ENCODE measurements at regions of chr7 and their contacts with region 1.

Region 1: GRCh38 chr7:151705636-151706276 is 171.2 kb downstream of the PRKAG2 start:
- DNase-seq: peak; percentile 30
- ATAC-seq: peak; percentile 78
- H3K4me3 ChIP-seq: no peak overlapping the region; a peak in 1 of 6 replicates
- H3K27ac ChIP-seq: no peak overlapping the region
- H3K4me1 ChIP-seq: peaks cover 7% of the 10 kb centered on the region; the same call in 1 of the 2 replicates
- H3K27me3 ChIP-seq: peaks cover 4 to 18% of the 10 kb centered on the region in 2 experiments; a peak in 3 of 5 replicates
- CTCF ChIP-seq: peak; percentile 54
- EP300 ChIP-seq: no peak
- POLR2A ChIP-seq: no peak
- RAD21 ChIP-seq: no peak

Region 2: GRCh38 chr7:151570366-151570915 is 135.3 kb before region 1 on chr7:
- CTCF ChIA-PET with region 1: no interaction called
- POLR2A ChIA-PET with region 1: no interaction called
- in situ Hi-C with region 1: no loop called
- intact Hi-C with region 1: loop called (anchors 5 kb)
- DNase-seq: no peak
- ATAC-seq: no peak
- H3K4me3 ChIP-seq: no peak overlapping the region
- H3K27ac ChIP-seq: no peak overlapping the region
- H3K4me1 ChIP-seq: no peaks in the 10 kb centered on the region
- H3K27me3 ChIP-seq: no peaks in the 10 kb centered on the region
- CTCF ChIP-seq: 0 out of 2 replicates have a peak, but pooled peaks have one; percentile 26
- EP300 ChIP-seq: no peak
- POLR2A ChIP-seq: no peak
- RAD21 ChIP-seq: no peak

Region 3: DNA sequence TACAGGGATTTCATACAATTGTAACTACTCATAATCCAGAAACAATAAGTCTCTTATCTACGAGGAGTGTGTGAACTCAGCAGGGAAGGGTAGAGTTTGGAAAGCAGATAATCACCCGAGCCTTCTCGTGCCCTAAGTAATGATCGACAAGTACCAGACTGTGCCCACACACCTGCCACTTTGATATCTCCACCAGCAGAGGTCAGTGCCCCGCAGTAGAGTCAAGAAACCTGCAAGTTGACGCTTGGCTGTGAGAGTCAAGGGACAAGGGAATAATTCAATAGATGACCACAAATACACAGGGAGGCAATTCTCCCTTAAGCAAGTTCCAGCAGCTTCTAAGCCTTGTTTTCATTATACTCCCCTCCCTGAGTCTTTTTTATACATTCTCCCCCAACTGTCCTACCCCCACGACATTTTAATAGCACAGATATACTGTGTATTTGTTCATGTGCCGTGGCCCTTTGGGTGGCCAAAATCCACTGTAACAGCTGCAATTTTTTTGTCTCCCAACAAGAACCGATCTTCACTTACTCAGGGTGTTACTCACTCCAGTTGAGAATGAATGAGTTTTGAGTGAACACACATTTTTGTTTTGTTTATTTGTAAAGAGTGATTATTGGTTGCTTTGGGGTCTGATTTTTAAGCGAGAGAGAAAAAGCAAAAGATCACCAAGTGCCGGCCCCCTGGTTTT is 79.2 kb before region 1 on chr7:
- CTCF ChIA-PET with region 1: interaction called, 8 read pairs
- POLR2A ChIA-PET with region 1: no interaction called
- in situ Hi-C with region 1: loop called (anchors 5 kb)
- intact Hi-C with region 1: loop called (anchors 2 kb)
- DNase-seq: peak; percentile 45
- ATAC-seq: peak; percentile 75
- H3K4me3 ChIP-seq: no peak overlapping the region
- H3K27ac ChIP-seq: no peak overlapping the region
- H3K4me1 ChIP-seq: peaks cover 10% of the 10 kb centered on the region
- H3K27me3 ChIP-seq: peaks cover 0 to 21% of the 10 kb centered on the region in 2 experiments; a peak in 2 of 5 replicates
- CTCF ChIP-seq: peak; percentile 58
- EP300 ChIP-seq: no peak
- POLR2A ChIP-seq: no peak
- RAD21 ChIP-seq: no peak